Activated CD4-positive, alpha-beta T cell treated with anti-CD3 and anti-CD28 coated beads, Interleukin-2, amount 10 ng/mL, durations not matched to agents 24 days and 14 days (primary cell): ENCODE measurements at regions of chr20 and their contacts with region 1.

Region 1: DNA sequence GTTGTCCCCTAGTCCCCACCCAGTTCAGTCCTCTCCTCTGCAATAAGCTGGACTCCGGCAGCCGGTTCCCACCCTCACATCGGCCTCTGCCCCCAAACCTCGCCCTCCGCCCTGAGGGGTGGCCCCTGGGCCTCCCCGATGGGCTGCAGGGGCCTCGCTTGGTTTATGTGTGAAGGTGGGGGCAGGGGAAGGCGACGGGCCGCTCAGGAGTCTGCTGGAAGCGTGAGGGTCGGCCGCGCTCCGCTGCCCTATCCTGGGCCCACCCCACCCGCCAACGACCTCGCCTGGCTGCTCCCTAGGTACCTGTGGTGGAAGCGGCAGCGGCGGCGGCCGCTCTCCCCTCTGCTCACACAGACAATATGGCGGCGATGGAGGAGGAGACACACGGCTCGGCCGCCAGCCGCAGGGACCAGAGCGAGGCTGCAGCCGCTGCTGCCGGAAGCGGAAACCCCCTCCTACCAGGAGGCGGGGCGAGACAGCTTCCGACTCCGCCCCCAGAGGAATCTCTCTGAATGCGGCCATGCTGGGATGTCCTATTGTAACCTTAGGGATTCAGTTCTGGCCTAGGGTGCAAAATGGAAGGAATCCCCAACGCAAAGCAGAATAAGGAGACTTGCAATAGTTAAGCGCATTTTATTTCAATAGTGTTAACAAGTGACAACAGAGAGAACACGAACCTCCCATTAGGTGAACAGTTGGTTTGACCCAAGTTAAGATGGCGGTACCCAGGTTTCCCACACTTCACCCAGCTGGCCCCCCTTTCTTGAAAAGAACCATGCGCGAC is at the start of gene CSNK2A1:
- DNase-seq: peak; percentile 99
- H3K4me3 Mint-ChIP-seq: peak within 1 kb of the TSS; percentile 88
- H3K27ac Mint-ChIP-seq: peak within 1 kb of the TSS; percentile 97
- H3K4me1 Mint-ChIP-seq: peaks cover 38% of the 10 kb centered on the region
- H3K27me3 Mint-ChIP-seq: peaks cover 9% of the 10 kb centered on the region
- total RNA-seq, gene CSNK2A1: 179 TPM in 2 replicates

Region 2: DNA sequence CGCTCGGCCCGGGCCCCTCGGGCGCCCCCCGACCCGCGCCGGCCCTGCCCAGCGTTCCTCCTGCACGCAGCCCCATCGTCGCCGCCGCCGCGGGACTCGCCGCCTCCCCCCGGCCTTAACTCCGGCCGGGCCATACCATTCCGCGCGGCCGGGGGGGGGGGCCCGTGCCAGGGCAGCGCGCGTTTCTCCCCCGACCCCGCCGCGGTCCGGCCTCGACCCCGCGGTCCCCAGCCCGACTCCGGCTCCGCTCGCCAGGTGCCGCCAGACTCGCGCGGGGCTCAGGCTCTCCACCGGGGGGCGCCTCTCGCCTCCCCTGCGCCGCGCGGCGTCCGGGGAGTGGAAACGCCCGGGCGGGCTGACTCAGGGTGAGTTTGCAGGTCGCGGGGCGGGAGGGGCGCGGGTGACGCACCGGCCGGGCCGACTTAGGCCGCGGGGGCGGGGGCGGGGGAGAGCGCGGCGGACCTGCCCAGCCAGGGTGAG is 109.6 kb after region 1 on chr20 and contains the start of gene SRXN1:
- intact Hi-C with region 1: loop called (anchors 1 kb)
- DNase-seq: peak; percentile 94
- H3K4me3 Mint-ChIP-seq: peak within 1 kb of the TSS; percentile 91
- H3K27ac Mint-ChIP-seq: peak within 1 kb of the TSS; percentile 84
- H3K4me1 Mint-ChIP-seq: peaks cover 29% of the 10 kb centered on the region
- H3K27me3 Mint-ChIP-seq: peaks cover 31% of the 10 kb centered on the region
- total RNA-seq, gene SRXN1: 24.1 and 25.5 TPM in 2 replicates

Region 3: GRCh38 chr20:844473-845225 is 301.1 kb after region 1 on chr20:
- intact Hi-C with region 1: loop called (anchors 10 kb)
- DNase-seq: peak; percentile 96
- H3K4me3 Mint-ChIP-seq: peak overlapping the region; percentile 87
- H3K27ac Mint-ChIP-seq: peak overlapping the region; percentile 57
- H3K4me1 Mint-ChIP-seq: peaks cover 46% of the 10 kb centered on the region
- H3K27me3 Mint-ChIP-seq: no peaks in the 10 kb centered on the region

Region 4: DNA sequence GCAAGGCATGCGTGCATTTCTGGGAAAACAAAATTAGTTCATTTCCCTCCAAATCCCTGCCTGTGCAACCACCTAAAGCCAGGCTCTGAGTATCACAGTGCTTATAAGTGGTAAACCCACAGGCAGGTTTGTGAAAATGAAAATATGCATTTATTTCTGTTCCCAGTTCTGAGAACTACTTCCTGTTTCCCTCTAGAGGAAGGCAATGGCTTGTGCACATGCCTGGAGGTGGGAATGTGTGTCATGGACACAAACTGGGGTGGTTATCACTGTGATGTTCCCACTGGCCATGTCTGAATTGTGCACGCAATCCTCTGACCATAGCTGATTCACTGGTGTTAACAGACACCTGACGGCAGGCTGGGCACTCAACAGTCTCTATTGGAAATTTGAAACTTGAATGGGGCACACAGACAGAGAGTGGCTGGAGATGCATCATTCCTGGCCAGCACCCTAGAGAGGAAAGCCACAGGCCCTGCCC is 316.2 kb after region 1 on chr20:
- intact Hi-C with region 1: no loop called
- DNase-seq: peak; percentile 66
- H3K4me3 Mint-ChIP-seq: peak overlapping the region; percentile 61
- H3K27ac Mint-ChIP-seq: peak overlapping the region; percentile 78
- H3K4me1 Mint-ChIP-seq: peaks cover 50% of the 10 kb centered on the region
- H3K27me3 Mint-ChIP-seq: no peaks in the 10 kb centered on the region